A549 (cell line): ENCODE measurements at regions of chr11 and their contacts with region 1.

Region 1: GRCh38 chr11:18721561-18722292 is 4.3 kb downstream of the IGSF22 start:
- DNase-seq: peak; percentile 64 to 75
- ATAC-seq: peak; percentile 77 to 88
- H3K4me3 ChIP-seq: peak overlapping the region; percentile 64
- H3K27ac ChIP-seq: peak overlapping the region; percentile 18 to 77
- H3K4me1 ChIP-seq: no peaks in the 10 kb centered on the region
- CTCF ChIP-seq: peak; percentile 54
- EP300 ChIP-seq: no peak
- POLR2A ChIP-seq: no peak
- RAD21 ChIP-seq: peak; percentile 17 to 41; a peak in 1 of 5 replicates

Region 2: DNA sequence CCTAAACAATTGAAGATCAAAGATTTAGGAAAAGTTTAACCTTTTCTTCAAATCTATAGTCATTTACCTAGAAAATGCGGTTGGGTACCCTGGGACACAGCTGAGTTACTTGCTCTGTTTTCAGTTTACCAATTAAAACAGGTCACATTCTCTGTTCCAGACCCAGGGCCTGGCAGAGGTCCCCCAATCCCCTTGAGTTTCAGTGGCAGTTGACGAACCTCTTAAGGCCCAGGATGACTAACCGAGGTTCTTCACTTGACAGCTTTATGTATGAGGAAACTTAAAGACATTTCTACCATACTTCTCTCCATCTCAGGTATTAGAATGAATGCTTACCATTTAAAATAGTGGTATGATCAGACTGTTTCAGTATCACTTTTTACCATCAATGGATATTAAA is 249.7 kb before region 1 on chr11:
- CTCF ChIA-PET with region 1: no interaction called
- POLR2A ChIA-PET with region 1: no interaction called
- DNase-seq: no peak
- ATAC-seq: no peak
- H3K4me3 ChIP-seq: no peak overlapping the region
- H3K27ac ChIP-seq: no peak overlapping the region
- H3K4me1 ChIP-seq: no peaks in the 10 kb centered on the region
- CTCF ChIP-seq: no peak
- EP300 ChIP-seq: no peak
- POLR2A ChIP-seq: no peak
- RAD21 ChIP-seq: no peak

Region 3: DNA sequence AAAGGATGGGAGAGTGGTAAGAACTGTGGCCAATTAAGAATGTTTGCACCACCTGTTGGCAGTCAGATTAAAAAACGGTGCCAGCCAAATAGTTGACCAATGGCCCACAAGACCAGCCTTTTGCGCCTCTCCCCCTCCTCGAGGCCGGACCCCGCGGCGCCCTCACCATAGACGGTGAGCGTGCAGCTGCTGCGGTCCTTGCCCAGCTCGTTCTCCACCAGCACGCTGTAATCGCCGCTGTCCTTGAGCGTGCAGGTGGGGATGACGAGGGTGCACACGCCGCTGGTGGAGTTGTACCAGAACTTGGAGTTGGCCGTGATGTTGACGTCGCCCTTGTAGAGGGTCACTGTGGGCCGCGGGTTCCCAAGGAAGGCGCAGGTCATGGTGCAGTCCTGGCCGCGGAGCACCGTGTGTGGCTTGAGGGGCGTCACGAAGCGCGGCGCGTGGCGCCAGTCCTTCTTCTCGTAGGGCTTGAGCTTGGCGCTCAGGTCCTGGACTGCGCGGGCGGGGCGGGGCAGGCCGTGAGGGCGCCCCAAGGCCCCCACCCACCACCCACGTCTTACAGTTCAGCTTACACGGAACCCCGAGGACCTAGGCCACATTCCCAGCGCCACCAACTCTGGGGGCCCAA is 16.0 kb before region 1 on chr11:
- CTCF ChIA-PET with region 1: interaction called, 17 read pairs
- POLR2A ChIA-PET with region 1: no interaction called
- DNase-seq: no peak
- ATAC-seq: no peak
- H3K4me3 ChIP-seq: no peak overlapping the region
- H3K27ac ChIP-seq: no peak overlapping the region
- H3K4me1 ChIP-seq: no peaks in the 10 kb centered on the region
- CTCF ChIP-seq: no peak
- EP300 ChIP-seq: no peak
- POLR2A ChIP-seq: no peak
- RAD21 ChIP-seq: no peak

Region 4: GRCh38 chr11:18741783-18742182 is 20.1 kb after region 1 on chr11:
- CTCF ChIA-PET with region 1: interaction called, 14 read pairs
- POLR2A ChIA-PET with region 1: no interaction called
- DNase-seq: no peak
- ATAC-seq: no peak
- H3K4me3 ChIP-seq: no peak overlapping the region
- H3K27ac ChIP-seq: no peak overlapping the region
- H3K4me1 ChIP-seq: no peaks in the 10 kb centered on the region
- CTCF ChIP-seq: peak; percentile 9; the same call in 2 of the 3 replicates
- EP300 ChIP-seq: no peak
- POLR2A ChIP-seq: no peak
- RAD21 ChIP-seq: no peak

Region 5: GRCh38 chr11:18768472-18768901 is 46.8 kb after region 1 on chr11:
- CTCF ChIA-PET with region 1: interaction called, 21 read pairs
- POLR2A ChIA-PET with region 1: no interaction called
- DNase-seq: no peak
- ATAC-seq: no peak
- H3K4me3 ChIP-seq: no peak overlapping the region
- H3K27ac ChIP-seq: no peak overlapping the region
- H3K4me1 ChIP-seq: peaks cover 11% of the 10 kb centered on the region
- CTCF ChIP-seq: no peak
- EP300 ChIP-seq: no peak
- POLR2A ChIP-seq: no peak
- RAD21 ChIP-seq: no peak